ENCODE measurements at regions of chr3 and their contacts with region 1.

Region 1: GRCh38 chr3:11060500-11061251 is 68.1 kb downstream of the SLC6A1 start:
- DNase-seq: no peak
- H3K4me3 ChIP-seq: peak overlapping the region; percentile 27; the same call in 1 of the 2 replicates
- CTCF ChIP-seq: peak; percentile 91

Region 2: DNA sequence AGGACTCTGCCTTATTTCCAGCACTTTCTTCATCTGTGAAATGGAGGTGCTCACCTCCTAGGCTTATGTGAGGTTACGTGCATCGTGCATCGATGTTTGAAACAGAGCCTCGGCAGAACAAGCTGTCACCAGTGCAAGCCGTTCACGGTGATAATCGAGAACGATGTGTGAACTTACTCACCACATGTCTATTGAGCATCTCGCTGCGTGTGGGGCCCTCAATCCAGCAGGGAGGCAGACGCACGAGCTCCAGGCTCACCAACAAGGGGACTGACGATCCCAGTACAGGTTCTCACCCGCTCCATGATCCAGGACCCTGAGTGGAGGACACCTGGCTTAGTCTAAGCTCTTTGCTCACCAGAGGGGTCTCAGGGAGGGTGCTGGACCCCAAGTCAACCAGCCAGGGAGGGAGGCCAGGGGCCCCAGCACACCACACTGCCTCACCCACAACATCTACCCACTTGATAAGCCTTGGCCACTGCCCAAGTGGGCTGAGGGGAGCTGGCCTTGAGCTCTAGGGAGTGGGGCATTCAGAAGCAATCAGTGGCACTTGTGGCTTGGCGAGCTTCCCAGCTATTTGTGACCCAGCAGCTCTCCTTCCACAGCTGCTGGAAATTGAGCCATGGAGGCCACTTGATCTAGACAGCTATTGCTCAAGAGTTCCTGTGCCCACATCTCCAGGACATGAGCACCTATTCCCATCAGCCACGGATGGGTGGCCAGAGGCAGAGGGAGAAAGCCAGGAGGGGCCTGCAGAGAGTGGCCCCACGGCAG is 102.5 kb before region 1 on chr3:
- CTCF ChIA-PET with region 1: interaction called, 41 read pairs
- POLR2A ChIA-PET with region 1: no interaction called
- DNase-seq: no peak
- H3K4me3 ChIP-seq: no peak overlapping the region
- CTCF ChIP-seq: no peak

Region 3: DNA sequence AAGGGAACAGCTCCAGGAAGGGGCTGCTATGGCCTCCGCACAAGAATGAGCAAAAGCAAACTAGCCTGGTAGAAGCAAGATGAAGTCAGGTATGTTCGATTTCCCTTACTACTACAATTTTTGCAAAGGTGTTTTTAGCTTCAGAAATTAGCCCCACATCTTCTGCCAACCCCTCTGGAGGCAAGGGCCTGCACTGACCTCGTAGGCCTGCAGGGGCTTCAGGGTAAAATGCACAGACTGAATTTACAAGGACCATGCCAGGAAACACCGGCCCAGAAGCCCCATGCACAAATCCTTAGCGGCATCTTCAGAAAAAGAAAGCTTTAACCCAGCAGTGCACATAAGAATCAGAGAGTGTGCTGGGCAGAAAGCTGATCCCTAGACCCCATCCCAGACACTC is 15.1 kb before region 1 on chr3:
- CTCF ChIA-PET with region 1: interaction called, 49 read pairs
- POLR2A ChIA-PET with region 1: no interaction called
- DNase-seq: no peak
- H3K4me3 ChIP-seq: no peak overlapping the region
- CTCF ChIP-seq: no peak

Region 4: DNA sequence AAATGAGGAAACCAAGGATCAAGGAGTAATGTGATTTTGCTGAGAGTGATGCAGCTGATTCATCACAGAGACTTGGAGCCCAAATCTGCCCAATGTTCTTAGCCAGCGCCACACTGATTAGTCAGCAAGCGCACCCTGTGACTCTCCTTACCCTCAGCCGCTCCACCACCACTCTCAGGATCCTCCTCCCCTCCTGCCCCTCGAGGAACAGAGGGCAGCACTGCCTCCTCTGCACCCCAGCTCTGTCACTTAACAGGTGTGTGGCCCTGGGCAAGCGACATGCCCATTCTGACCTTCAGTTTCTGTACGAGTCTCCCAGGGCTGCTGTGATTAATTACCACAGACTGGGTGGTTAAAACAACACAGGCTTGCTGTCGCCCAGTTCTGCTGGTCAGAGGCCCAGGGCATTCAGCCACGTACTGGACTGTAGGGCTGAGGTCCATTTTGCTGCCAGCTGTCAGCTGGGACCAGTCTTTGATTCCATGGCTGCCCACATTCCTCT is 57.6 kb after region 1 on chr3:
- CTCF ChIA-PET with region 1: interaction called, 12 read pairs
- POLR2A ChIA-PET with region 1: no interaction called
- DNase-seq: no peak
- H3K4me3 ChIP-seq: no peak overlapping the region
- CTCF ChIP-seq: no peak

Region 5: DNA sequence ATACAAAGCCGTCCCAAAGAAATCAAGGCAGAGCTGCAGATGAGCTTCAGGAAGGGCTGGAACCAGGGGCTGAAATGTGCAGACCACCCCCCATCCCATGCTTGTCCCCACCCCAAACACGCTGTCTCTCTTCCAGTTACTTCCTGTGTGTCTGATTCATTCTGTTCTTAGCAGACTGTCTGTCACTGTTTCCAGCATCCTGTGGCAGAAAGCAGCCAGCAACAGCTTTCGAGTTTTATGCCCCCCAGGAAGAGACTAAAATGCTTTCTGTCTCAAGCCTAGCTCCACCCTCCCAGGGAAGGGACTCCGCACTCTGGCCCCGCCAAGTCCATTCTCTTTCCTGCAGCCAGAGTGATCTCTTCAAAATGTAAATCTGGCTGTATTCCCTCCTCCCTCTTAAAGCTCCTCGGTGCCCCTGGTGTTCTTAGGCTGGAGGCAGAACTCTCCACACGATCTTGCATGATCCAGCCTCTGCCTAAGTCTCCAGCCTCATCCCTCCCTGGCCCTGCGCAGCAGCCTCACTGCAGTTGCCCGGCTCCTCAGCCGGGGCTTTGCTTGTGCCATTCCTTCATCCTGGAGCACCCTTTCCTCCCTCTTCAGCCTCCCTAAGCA is 135.2 kb after region 1 on chr3:
- CTCF ChIA-PET with region 1: interaction called, 65 read pairs
- POLR2A ChIA-PET with region 1: no interaction called
- DNase-seq: no peak
- H3K4me3 ChIP-seq: peak overlapping the region; percentile 38
- CTCF ChIP-seq: peak; percentile 1

Region 6: DNA sequence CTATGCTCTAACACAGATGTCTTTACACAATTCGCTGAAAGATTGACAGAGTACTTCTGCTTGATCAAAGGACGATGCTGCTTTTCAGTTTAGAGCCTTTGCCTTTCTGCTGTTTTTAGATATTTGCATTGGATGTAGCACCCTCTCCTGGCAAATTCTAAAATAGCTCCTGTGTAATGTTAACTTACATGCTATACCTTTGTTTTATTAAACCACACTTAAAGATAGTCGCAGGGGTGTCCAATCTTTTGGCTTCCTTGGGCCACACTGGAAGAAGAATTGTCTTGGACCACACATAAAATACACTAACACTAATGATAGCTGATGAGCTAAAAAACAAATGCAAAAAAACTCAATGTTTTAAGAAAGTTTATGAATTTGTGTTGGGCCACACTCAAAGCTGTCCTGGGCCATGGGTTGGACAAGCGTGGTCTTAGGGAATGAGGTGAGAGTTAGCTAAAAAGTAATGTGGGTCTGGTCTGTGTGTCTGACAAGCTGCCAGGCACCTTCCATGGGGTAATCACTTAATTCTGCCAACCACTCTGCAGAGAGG is 274.5 kb after region 1 on chr3:
- CTCF ChIA-PET with region 1: interaction called, 195 read pairs
- POLR2A ChIA-PET with region 1: no interaction called
- DNase-seq: peak; percentile 28
- H3K4me3 ChIP-seq: no peak overlapping the region
- CTCF ChIP-seq: peak; percentile 45